WTC11 (cell line): ENCODE measurements at regions of chr18 and their contacts with region 1.

Region 1: DNA sequence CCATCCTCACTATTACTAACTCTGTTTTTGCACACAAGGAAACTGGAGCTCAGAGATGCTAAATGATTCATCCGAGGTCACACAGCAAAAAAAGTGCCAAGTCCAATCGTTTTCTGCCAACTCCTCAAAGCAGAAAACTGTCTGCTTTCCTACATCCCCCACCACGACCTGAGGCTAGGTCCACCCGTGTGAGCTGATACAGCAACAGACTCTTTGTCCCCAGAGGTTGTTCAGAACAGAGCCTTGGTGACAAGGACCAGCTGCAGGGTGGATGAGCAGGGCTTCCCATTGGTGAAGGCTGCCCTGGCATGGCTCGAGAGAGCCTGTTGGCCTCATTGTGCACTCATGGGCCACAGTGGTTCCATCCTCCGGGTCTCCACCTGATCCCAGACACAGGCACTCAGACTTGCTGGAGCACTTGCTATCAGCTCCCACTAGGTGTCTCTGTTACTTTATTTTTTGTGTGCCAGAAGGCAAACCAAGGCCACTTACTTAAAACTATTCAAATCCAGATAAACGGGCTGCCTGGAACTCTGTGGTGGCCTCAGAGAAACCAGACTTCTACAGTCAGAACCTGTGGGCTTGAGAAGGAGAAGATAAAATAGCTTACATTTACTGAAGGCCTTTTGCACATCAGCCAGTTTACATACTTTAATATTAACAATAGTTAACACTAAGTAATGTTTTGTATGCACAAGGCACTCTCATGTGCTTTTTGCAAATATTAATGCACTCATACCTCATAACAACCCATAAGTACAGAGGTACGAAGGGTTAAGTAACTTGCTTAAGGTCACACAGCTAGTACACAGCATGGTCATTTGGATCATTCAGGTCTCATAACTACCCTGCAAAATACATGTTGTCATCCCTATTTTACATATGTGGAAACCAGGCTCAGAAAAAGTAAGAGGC is 62.9 kb upstream of the CTIF start:
- DNase-seq: peak; percentile 62
- ATAC-seq: peak; percentile 99
- H3K4me3 Mint-ChIP-seq: no peak overlapping the region
- H3K27ac Mint-ChIP-seq: no peak overlapping the region
- H3K4me1 Mint-ChIP-seq: no peaks in the 10 kb centered on the region
- H3K27me3 Mint-ChIP-seq: peaks cover 10% of the 10 kb centered on the region
- CTCF ChIP-seq: peak; percentile 75

Region 2: GRCh38 chr18:48538531-48539405 is 62.9 kb after region 1 on chr18 and contains the start of gene CTIF:
- CTCF ChIA-PET with region 1: no interaction called
- POLR2A ChIA-PET with region 1: interaction called, 10 read pairs
- DNase-seq: peak; percentile 96
- ATAC-seq: peak; percentile 77
- H3K4me3 Mint-ChIP-seq: peak within 1 kb of the TSS; percentile 81
- H3K27ac Mint-ChIP-seq: peak within 1 kb of the TSS; percentile 78
- H3K4me1 Mint-ChIP-seq: peaks cover 46% of the 10 kb centered on the region
- H3K27me3 Mint-ChIP-seq: peaks cover 18% of the 10 kb centered on the region
- CTCF ChIP-seq: no peak
- total RNA-seq, gene CTIF: 18.9 to 28.5 TPM (median 20.4 TPM) in 3 replicates

Region 3: DNA sequence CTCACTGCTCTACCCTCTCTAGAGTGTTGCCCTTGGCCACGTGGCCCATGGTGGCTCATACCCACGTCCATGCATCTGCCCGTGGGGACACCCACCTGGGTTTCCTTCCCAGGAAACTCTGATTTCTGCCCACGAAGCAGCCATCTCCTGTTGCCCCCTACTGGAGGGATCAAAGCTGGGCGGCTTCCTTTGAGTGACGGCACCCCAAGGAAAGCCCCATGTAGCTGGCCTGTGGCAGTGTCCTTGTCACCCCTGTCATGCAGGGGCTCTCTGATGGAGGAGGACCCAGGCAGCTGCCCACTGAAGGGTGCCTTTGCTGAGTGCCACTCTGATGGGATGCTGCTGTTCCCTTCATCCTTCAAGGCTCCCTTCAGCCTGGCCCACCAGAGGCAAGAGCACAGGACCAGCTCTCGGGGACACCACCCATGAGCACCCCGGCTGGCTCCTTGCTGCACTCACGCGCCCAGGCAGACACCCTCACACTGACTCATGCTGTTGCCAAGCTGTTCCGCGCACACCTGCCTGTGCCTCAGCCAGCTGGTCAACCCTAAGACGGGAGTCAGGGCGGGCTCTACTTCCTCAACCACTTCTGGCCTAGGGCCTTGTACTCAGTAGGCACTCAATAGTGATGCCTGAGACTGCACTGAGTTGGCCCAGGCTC is 164.0 kb after region 1 on chr18:
- CTCF ChIA-PET with region 1: interaction called, 17 read pairs
- POLR2A ChIA-PET with region 1: no interaction called
- DNase-seq: peak; percentile 52
- ATAC-seq: peak; percentile 51
- H3K4me3 Mint-ChIP-seq: no peak overlapping the region
- H3K27ac Mint-ChIP-seq: no peak overlapping the region
- H3K4me1 Mint-ChIP-seq: peaks cover 9% of the 10 kb centered on the region
- H3K27me3 Mint-ChIP-seq: no peaks in the 10 kb centered on the region
- CTCF ChIP-seq: 0 out of 2 replicates have a peak, but pooled peaks have one; percentile 47

Region 4: DNA sequence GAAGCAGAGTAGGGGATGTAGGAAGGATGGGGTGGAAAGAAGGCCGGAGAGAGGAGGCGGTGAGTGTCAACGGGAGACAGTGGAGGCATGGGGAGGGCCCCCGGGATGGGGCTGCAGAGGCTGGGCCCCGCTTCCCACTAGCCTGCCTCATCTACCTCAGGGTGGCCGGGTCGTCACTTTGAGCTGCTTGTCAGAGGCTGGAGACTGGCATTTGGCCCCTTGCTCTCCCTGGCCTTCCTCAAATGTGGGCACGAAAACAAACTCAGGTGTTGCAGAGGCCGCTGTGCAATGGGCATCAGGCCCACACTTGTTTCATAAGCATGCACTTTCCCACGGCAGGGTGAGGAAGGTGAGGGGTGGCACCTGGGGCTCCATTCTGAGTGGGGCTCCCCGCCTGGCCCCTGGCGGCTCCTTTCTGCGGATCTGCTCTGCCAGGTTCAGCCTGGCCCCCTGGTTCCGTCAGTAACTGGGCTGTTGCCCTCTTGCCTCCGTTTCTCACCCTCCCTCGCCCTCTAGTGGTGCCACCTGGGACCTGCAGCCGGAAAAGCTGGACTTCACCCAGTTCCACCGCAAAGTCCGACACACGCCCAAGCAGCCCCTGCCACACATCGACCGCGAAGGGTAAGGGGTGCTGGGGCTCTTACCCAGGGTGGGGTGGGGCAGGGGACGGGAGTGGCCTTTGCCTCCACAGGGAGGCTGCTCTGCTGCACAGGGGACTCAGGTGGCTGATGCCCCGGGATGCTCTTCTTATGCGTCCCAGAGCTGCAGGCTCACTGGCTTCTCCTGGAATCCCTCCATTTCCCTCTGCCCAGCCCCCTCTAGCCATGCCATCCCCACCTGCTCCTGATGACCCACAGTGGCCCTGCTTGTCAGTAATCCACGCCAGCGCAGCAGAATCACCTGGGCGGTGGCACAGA is 188.3 kb after region 1 on chr18:
- CTCF ChIA-PET with region 1: interaction called, 11 read pairs
- POLR2A ChIA-PET with region 1: no interaction called
- DNase-seq: peak; percentile 92
- ATAC-seq: peak; percentile 66
- H3K4me3 Mint-ChIP-seq: no peak overlapping the region
- H3K27ac Mint-ChIP-seq: no peak overlapping the region
- H3K4me1 Mint-ChIP-seq: peaks cover 18% of the 10 kb centered on the region
- H3K27me3 Mint-ChIP-seq: no peaks in the 10 kb centered on the region
- CTCF ChIP-seq: peak; percentile 94